ENCODE measurements at regions of chr20 and their contacts with region 1.

Region 1: DNA sequence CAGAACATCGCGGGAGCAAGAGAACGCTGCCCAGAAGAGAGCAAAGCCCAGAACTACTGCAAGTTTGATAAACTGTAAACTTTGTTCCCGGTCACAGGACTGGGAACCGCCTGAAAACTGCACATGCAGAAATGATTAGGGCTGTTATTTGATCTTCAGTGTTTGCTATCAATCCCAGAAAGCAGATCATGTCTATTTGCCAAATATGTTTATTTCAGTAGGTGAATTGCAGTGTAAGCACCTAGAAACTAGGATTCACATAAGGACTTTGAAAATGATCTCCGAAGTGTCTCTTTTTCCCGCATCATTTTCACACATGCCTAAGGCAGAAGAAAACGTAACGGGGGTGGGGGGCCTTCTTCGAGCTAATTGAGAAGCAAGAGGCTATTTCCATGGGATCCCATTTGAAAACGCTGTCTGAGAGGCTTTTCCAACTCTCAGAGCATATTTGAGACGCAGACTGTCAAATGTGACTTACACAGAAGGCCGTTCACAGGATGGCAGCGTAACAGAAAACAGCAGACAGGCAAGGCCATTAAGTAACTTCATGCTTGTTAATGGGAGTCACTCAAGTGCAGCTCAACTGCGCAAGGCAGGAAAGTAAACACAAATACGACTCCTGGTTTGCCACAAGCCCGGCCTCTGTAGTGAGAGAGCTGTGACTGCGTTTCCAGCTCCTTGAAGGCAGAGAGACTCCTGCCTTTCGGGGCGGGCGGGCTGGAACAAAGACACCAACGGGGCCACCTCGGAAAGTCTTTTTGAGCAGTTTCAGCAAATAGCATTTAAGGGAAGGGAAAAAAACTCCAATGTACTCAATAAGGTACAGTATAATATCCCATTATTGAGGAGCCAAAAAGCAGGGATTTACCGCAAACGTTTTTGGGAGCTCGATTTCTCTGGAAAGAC is 144.7 kb upstream of the ZNF217 start:
- DNase-seq: peak; percentile 88
- ATAC-seq: peak; percentile 90
- H3K4me3 ChIP-seq: peak overlapping the region; percentile 44 to 59 (median 45)
- H3K27ac ChIP-seq: peak overlapping the region; percentile 73
- H3K4me1 ChIP-seq: peaks cover 83% of the 10 kb centered on the region
- H3K27me3 ChIP-seq: no peaks in the 10 kb centered on the region; a peak in 1 of 5 replicates
- CTCF ChIP-seq: no peak; the same call in 1 of the 2 replicates
- EP300 ChIP-seq: peak in 1 of 2 experiments; percentile 63; a peak in 1 of 4 replicates
- POLR2A ChIP-seq: peak; percentile 58 to 74
- RAD21 ChIP-seq: 0 out of 2 replicates have a peak, but pooled peaks have one; percentile 24

Region 2: GRCh38 chr20:53594068-53595017 is 143.9 kb before region 1 on chr20:
- CTCF ChIA-PET with region 1: no interaction called
- POLR2A ChIA-PET with region 1: interaction called, 23 read pairs
- in situ Hi-C with region 1: no loop called
- intact Hi-C with region 1: loop called (anchors 5 kb)
- DNase-seq: peak; percentile 89
- ATAC-seq: peak; percentile 88
- H3K4me3 ChIP-seq: peak overlapping the region; percentile 89 to 98 (median 90)
- H3K27ac ChIP-seq: peak overlapping the region; percentile 87
- H3K4me1 ChIP-seq: peaks cover 43% of the 10 kb centered on the region
- H3K27me3 ChIP-seq: no peaks in the 10 kb centered on the region; a peak in 1 of 5 replicates
- CTCF ChIP-seq: peak; percentile 88
- EP300 ChIP-seq: peak in 1 of 2 experiments; percentile 14; a peak in 1 of 4 replicates
- POLR2A ChIP-seq: peak; percentile 52 to 60
- RAD21 ChIP-seq: peak; percentile 91

Region 3: GRCh38 chr20:53652090-53652858 is 86.0 kb before region 1 on chr20:
- CTCF ChIA-PET with region 1: no interaction called
- POLR2A ChIA-PET with region 1: interaction called, 4 read pairs
- in situ Hi-C with region 1: no loop called
- intact Hi-C with region 1: loop called (anchors 2 kb)
- DNase-seq: peak; percentile 97
- ATAC-seq: peak; percentile 95
- H3K4me3 ChIP-seq: peak overlapping the region; percentile 8 to 54 (median 39); a peak in 5 of 6 replicates
- H3K27ac ChIP-seq: peak overlapping the region; percentile 93
- H3K4me1 ChIP-seq: peaks cover 71% of the 10 kb centered on the region
- H3K27me3 ChIP-seq: no peaks in the 10 kb centered on the region
- CTCF ChIP-seq: no peak
- EP300 ChIP-seq: peak; percentile 80 to 96; a peak in 3 of 4 replicates
- POLR2A ChIP-seq: peak in 1 of 2 experiments; percentile 40; a peak in 2 of 4 replicates
- RAD21 ChIP-seq: 0 out of 2 replicates have a peak, but pooled peaks have one; percentile 25

Region 4: GRCh38 chr20:53668992-53669391 is 69.3 kb before region 1 on chr20:
- CTCF ChIA-PET with region 1: no interaction called
- POLR2A ChIA-PET with region 1: no interaction called
- in situ Hi-C with region 1: no loop called
- intact Hi-C with region 1: no loop called
- DNase-seq: no peak
- ATAC-seq: no peak
- H3K4me3 ChIP-seq: no peak overlapping the region
- H3K27ac ChIP-seq: no peak overlapping the region
- H3K4me1 ChIP-seq: peaks cover 12% of the 10 kb centered on the region
- H3K27me3 ChIP-seq: no peaks in the 10 kb centered on the region
- CTCF ChIP-seq: no peak
- EP300 ChIP-seq: no peak
- POLR2A ChIP-seq: no peak
- RAD21 ChIP-seq: no peak

Region 5: GRCh38 chr20:53711394-53712211 is 26.7 kb before region 1 on chr20:
- CTCF ChIA-PET with region 1: no interaction called
- POLR2A ChIA-PET with region 1: interaction called, 19 read pairs
- in situ Hi-C with region 1: no loop called
- intact Hi-C with region 1: no loop called
- DNase-seq: peak; percentile 69
- ATAC-seq: peak; percentile 76
- H3K4me3 ChIP-seq: peak overlapping the region; percentile 35 to 49 (median 42); a peak in 5 of 6 replicates
- H3K27ac ChIP-seq: peak overlapping the region; percentile 30
- H3K4me1 ChIP-seq: peaks cover 58% of the 10 kb centered on the region
- H3K27me3 ChIP-seq: no peaks in the 10 kb centered on the region
- CTCF ChIP-seq: no peak
- EP300 ChIP-seq: peak in 1 of 2 experiments; percentile 66; a peak in 3 of 4 replicates
- POLR2A ChIP-seq: peak in 1 of 2 experiments; percentile 58; a peak in 1 of 4 replicates
- RAD21 ChIP-seq: no peak

Region 6: DNA sequence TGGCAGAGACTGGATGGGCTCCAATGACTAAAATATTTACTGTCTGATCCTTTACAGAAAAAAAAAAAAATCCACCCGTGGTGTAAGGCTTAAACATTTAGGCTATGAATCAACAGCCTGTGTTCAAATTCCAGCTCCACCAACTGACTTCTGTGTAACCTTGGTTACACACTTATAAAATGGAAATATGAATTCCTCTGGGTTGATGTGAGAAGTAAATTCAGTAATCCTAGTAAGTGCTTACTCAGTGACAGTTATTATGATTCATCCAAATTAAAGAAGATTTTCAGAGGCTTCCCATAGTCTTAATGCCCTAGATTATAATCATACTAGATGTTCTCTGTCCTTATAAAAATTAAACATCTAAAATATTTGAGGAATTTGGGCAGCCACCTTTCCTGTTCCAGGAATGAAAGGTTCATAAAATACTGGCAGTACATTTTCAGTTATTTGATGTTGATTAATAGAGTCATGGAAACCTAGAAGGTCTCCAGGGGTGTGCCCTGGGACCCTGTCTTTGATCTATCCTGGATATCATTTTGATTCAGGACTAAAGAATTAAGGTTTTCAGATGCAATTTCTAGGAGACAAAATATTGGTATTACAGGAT is 35.6 kb after region 1 on chr20:
- CTCF ChIA-PET with region 1: no interaction called
- POLR2A ChIA-PET with region 1: interaction called, 22 read pairs
- in situ Hi-C with region 1: no loop called
- intact Hi-C with region 1: no loop called
- DNase-seq: peak; percentile 66
- ATAC-seq: peak; percentile 51
- H3K4me3 ChIP-seq: no peak overlapping the region
- H3K27ac ChIP-seq: peak overlapping the region; percentile 56
- H3K4me1 ChIP-seq: peaks cover 76% of the 10 kb centered on the region
- H3K27me3 ChIP-seq: no peaks in the 10 kb centered on the region
- CTCF ChIP-seq: no peak
- EP300 ChIP-seq: no peak
- POLR2A ChIP-seq: no peak
- RAD21 ChIP-seq: no peak

Region 7: DNA sequence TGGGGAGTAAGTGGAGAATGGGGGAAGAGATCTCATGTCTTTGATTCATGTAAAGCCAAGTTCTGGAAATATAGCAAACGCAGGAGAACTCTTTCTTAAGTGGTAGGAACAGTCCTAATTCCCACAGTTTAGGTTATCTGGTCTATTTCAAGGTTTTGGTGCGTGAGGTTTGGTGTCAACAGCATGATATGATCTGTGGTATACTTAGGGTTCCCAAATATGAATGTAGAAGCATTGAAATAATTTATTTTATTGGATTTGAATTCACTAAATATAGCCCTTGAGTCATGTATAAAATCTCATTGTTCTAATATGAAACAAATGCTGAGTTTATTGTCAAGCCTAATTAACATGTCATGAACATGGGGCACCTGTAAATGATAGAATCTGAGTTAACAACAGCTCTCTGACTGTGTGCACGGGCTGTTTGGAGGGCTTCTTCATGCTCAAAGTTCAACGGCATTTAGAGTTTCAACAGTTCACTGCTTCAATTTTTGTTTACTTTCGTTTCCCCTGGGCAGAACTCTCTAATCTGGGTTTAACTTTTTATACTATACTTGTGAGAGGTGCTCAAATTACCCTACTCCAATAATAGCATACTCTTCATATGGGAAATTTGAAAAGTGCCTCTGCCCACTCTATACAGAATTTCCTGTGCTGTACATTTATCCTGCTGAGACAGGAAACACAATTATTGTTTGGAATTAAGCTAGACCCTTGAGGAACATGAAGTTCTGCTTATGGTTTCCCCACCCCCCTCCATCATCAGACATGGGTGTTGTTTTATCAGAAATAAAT is 91.6 kb after region 1 on chr20:
- CTCF ChIA-PET with region 1: no interaction called
- POLR2A ChIA-PET with region 1: interaction called, 11 read pairs
- in situ Hi-C with region 1: no loop called
- intact Hi-C with region 1: no loop called
- DNase-seq: peak; percentile 94
- ATAC-seq: peak; percentile 96
- H3K4me3 ChIP-seq: peak overlapping the region in 2 of 3 experiments; percentile 25 to 33; a peak in 4 of 6 replicates
- H3K27ac ChIP-seq: peak overlapping the region; percentile 70
- H3K4me1 ChIP-seq: peaks cover 64% of the 10 kb centered on the region
- H3K27me3 ChIP-seq: no peaks in the 10 kb centered on the region
- CTCF ChIP-seq: no peak
- EP300 ChIP-seq: peak in 1 of 2 experiments; percentile 74; a peak in 2 of 4 replicates
- POLR2A ChIP-seq: no peak
- RAD21 ChIP-seq: no peak

Region 8: GRCh38 chr20:53939572-53940359 is 201.5 kb after region 1 on chr20:
- CTCF ChIA-PET with region 1: no interaction called
- POLR2A ChIA-PET with region 1: interaction called, 4 read pairs
- in situ Hi-C with region 1: no loop called
- intact Hi-C with region 1: loop called (anchors 2 kb)
- DNase-seq: peak; percentile 95
- ATAC-seq: peak; percentile 91
- H3K4me3 ChIP-seq: no peak overlapping the region; a peak in 1 of 6 replicates
- H3K27ac ChIP-seq: no peak overlapping the region
- H3K4me1 ChIP-seq: peaks cover 83% of the 10 kb centered on the region
- H3K27me3 ChIP-seq: no peaks in the 10 kb centered on the region; a peak in 1 of 5 replicates
- CTCF ChIP-seq: peak; percentile 94
- EP300 ChIP-seq: no peak
- POLR2A ChIP-seq: no peak
- RAD21 ChIP-seq: peak; percentile 95

Measured in HepG2 (cell line).